CD4-positive, alpha-beta memory T cell (primary cell): ENCODE measurements at regions of chr5 and their contacts with region 1.

Region 1: GRCh38 chr5:143923634-143924255 is 111.8 kb downstream of the HMHB1 start:
- DNase-seq: no peak
- H3K4me3 ChIP-seq: no peak overlapping the region
- H3K4me3 Mint-ChIP-seq: no peak overlapping the region
- H3K27ac ChIP-seq: no peak overlapping the region
- H3K27ac Mint-ChIP-seq: no peak overlapping the region
- H3K4me1 ChIP-seq: no peaks in the 10 kb centered on the region
- H3K4me1 Mint-ChIP-seq: no peaks in the 10 kb centered on the region
- H3K27me3 ChIP-seq: no peaks in the 10 kb centered on the region
- H3K27me3 Mint-ChIP-seq: no peaks in the 10 kb centered on the region

Region 2: DNA sequence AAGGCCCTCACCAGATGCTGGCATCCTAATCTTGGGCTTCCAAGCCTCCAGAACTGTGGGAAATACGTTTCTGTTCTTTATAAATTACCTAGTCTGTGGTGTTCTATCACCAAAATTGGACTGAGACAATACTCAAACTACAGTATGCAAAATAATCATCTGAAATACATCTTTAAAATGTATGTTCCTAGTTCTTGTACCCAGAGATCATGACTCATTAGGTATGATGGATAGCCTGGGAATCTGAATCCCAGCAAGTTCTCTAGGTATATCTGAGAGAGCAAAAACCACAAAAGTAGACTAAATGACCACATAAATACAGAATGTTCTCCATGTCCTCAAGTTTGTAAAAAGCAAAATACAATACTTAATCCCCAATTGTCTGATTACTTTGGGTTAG is 80.4 kb after region 1 on chr5:
- CTCF ChIA-PET with region 1: no interaction called
- POLR2A ChIA-PET with region 1: no interaction called
- intact Hi-C with region 1: loop called (anchors 10 kb)
- DNase-seq: no peak
- H3K4me3 ChIP-seq: no peak overlapping the region
- H3K4me3 Mint-ChIP-seq: no peak overlapping the region
- H3K27ac ChIP-seq: no peak overlapping the region
- H3K27ac Mint-ChIP-seq: no peak overlapping the region
- H3K4me1 ChIP-seq: no peaks in the 10 kb centered on the region
- H3K4me1 Mint-ChIP-seq: no peaks in the 10 kb centered on the region
- H3K27me3 ChIP-seq: no peaks in the 10 kb centered on the region
- H3K27me3 Mint-ChIP-seq: no peaks in the 10 kb centered on the region